ENCODE measurements at regions of chr12 and their contacts with region 1.

Region 1: DNA sequence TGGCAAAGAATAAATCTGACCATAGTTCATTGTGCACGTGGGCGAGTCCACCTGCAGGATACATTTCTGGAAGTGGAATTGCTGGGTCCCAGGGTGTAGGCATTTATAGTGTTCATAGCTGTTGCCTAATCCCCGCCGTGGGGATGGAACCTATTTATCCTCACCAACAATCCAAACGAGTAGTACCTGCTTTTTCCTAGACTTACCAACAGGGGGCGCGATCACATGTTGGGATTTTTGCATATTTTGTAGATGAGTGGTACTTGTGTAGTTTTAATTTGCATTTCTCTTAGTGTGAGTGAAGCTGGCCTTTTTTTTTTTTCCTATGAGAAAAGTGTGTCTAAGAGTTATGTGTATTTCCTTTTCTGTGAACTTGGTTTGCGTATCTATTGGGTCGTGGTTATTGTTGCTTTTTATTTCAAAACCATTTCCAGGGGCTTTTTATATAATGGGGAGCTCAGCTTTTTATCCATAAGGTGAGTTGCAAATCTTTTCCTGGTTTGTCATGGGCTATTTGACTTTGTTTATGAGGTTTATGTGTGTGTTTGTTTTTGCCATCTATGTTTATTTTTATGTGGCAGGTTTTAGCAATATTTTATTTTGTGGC is 67.2 kb downstream of the CCDC92 start:
- DNase-seq: peak; percentile 73
- CTCF ChIP-seq: peak; percentile 67

Region 2: DNA sequence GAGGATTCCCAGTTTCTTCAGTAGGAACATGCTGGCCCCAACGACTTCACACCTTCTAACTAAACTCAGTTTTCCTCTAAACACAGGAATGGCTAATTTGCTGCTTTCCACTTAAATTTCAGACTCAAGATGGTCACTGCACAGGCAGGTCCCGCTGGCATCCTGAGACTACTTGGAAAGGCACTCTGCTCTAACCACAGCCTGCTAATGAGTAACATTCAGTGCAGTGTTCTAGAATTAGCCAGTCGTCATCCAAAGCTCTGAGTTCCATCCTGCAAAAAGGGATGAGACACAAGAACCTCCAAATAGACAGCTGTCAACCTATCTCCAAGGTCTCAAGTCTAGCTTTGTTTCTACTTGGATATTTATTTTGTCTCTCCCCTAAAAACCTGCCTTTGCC is 61.2 kb after region 1 on chr12:
- CTCF ChIA-PET with region 1: interaction called, 12 read pairs
- POLR2A ChIA-PET with region 1: no interaction called
- DNase-seq: no peak
- CTCF ChIP-seq: no peak

Measured in GM10248 (cell line).